Calu3 (cell line): ENCODE measurements at regions of chr11 and their contacts with region 1.

Region 1: GRCh38 chr11:74726547-74727182 is 4.6 kb downstream of the CHRDL2 start:
- DNase-seq: peak; percentile 75
- H3K4me3 Mint-ChIP-seq: no peak overlapping the region
- H3K27ac Mint-ChIP-seq: no peak overlapping the region
- H3K4me1 Mint-ChIP-seq: no peaks in the 10 kb centered on the region
- H3K27me3 Mint-ChIP-seq: peaks cover 92% of the 10 kb centered on the region
- CTCF ChIP-seq: peak; percentile 63

Region 2: DNA sequence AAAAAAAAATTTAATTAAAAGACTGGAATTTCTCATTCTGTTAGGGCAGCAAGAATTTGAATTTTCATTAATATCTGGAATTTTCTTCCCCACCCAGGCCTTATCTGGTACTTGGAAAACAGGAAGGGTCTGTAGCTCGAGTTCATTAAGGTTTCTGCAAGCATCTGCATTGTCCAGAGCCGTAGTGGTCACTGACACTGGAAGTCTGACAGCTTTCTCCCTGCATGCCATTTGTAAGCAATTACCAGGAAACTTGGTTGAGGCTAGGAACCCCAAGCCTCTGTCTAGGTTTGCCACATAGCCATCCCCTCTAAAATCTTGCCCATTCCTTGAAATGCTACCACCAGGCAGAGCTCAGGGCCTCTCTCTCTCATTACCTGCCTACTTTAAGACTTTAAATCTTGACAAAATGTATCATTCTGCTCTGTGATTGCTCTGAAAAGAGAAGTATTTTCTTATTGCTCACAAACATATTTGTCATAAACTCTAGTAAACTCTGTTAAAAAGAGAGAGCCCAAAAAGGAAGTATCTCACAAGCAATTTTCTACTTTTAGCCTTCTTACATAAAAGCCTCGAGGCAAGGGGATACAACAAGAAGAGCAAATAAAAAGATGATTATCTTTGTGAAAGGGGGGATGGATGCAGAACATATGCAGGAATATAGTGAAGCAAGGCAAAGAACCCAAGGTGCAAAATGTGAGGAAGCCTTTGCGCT is 322.9 kb before region 1 on chr11:
- CTCF ChIA-PET with region 1: no interaction called
- intact Hi-C with region 1: no loop called
- DNase-seq: no peak
- H3K4me3 Mint-ChIP-seq: no peak overlapping the region
- H3K27ac Mint-ChIP-seq: no peak overlapping the region
- H3K4me1 Mint-ChIP-seq: peaks cover 8% of the 10 kb centered on the region
- H3K27me3 Mint-ChIP-seq: no peaks in the 10 kb centered on the region
- CTCF ChIP-seq: no peak

Region 3: GRCh38 chr11:74615311-74615710 is 111.4 kb before region 1 on chr11:
- CTCF ChIA-PET with region 1: no interaction called
- intact Hi-C with region 1: loop called (anchors 5 kb)
- DNase-seq: no peak
- H3K4me3 Mint-ChIP-seq: no peak overlapping the region
- H3K27ac Mint-ChIP-seq: no peak overlapping the region
- H3K4me1 Mint-ChIP-seq: no peaks in the 10 kb centered on the region
- H3K27me3 Mint-ChIP-seq: no peaks in the 10 kb centered on the region
- CTCF ChIP-seq: no peak

Region 4: DNA sequence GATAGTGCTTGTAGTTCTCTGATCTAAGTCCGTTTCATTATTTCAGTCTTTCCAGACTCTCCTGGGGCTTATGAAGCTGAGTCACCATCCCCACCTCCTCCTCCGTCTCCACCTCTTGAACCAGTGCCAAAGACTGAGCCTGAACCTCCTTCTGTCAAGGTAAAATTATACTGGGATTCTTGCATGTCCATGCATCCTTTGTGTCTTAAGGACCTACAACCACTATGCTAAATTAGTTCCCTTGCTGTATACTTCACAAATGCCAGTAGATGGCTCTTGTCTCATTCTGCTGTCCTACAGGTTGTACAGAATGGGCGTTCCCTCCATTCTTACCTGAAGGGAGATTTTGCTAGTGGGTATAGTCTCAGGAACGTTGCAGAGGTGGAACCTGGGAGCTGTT is 92.1 kb before region 1 on chr11:
- CTCF ChIA-PET with region 1: no interaction called
- intact Hi-C with region 1: loop called (anchors 5 kb)
- DNase-seq: peak; percentile 36
- H3K4me3 Mint-ChIP-seq: no peak overlapping the region
- H3K27ac Mint-ChIP-seq: no peak overlapping the region
- H3K4me1 Mint-ChIP-seq: peaks cover 52% of the 10 kb centered on the region
- H3K27me3 Mint-ChIP-seq: no peaks in the 10 kb centered on the region
- CTCF ChIP-seq: no peak

Region 5: GRCh38 chr11:74702383-74703007 is 24.2 kb before region 1 on chr11:
- CTCF ChIA-PET with region 1: interaction called, 41 read pairs
- intact Hi-C with region 1: no loop called
- DNase-seq: peak; percentile 74
- H3K4me3 Mint-ChIP-seq: no peak overlapping the region
- H3K27ac Mint-ChIP-seq: no peak overlapping the region
- H3K4me1 Mint-ChIP-seq: peaks cover 9% of the 10 kb centered on the region
- H3K27me3 Mint-ChIP-seq: peaks cover 39% of the 10 kb centered on the region
- CTCF ChIP-seq: peak; percentile 87

Region 6: DNA sequence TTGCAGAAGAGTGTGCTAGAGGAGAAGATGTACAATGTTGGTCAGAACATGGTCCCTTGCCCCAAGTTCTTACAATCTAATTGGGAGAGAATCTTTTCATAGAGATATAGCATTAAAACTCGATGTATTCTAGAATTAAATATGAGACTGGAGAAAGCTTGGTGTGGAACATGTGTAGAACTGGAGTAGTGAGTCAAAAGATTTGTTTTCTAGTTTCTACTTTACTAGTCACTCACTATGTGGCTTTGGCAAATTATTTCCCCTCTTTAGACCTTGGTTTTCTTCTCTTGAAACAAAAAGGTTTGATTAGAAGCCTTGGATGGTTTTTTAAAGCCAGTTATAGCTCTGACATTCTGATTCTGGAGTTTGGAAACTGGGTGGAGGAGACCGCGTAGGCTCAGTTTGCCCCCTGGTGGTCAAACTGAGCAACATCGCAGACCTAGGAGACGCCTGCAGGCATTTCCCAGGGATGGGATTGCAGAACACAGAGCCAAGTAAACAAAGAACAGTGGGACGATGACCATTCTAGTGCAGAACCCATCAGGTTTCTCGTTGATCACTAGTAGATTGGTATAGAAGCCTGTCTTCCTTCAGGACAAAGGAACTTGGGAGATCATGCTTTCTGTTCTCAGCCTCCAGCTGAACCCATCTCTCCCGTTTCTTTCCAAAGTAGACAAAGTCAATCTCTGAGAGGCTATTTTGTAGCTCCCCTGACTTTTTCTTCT is 13.0 kb after region 1 on chr11:
- CTCF ChIA-PET with region 1: interaction called, 11 read pairs
- intact Hi-C with region 1: no loop called
- DNase-seq: peak; percentile 64
- H3K4me3 Mint-ChIP-seq: no peak overlapping the region
- H3K27ac Mint-ChIP-seq: no peak overlapping the region
- H3K4me1 Mint-ChIP-seq: no peaks in the 10 kb centered on the region
- H3K27me3 Mint-ChIP-seq: peaks cover 47% of the 10 kb centered on the region
- CTCF ChIP-seq: peak; percentile 83